Body of pancreas (tissue), 4 donors: ENCODE measurements at regions of chr4 and their contacts with region 1.

Region 1: DNA sequence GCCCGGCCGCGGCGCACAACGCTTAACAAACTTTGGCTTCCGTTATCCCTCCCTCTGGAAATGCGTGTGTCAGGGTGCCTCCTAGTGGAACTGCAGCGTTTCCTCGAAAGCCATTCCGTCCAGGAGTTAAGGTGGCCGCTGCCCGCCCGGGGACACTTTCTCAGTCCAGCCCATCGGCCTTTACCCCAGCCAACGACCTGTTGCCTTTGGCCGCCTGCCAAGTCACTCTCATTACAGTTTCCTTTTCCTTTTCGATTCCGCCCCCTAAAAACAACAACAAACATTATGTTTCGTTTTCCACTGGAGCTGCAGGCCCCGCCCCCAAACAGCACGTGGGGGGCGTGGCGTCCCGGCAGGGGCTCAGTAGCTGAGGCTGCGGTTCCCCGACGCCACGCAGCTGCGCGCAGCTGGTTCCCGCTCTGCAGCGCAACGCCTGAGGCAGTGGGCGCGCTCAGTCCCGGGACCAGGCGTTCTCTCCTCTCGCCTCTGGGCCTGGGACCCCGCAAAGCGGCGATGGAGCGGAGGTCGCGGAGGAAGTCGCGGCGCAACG is at the start of gene HERC5:
- DNase-seq: peak; percentile 91 to 94 (median 92)
- ATAC-seq: peak; percentile 94
- H3K4me3 ChIP-seq: peak within 1 kb of the TSS; percentile 73 to 83
- H3K27ac ChIP-seq: peak within 1 kb of the TSS; percentile 26 to 84 (median 79)
- H3K4me1 ChIP-seq: peaks cover 11% of the 10 kb centered on the region
- H3K27me3 ChIP-seq: no peaks in the 10 kb centered on the region
- CTCF ChIP-seq: peak; percentile 39 to 92 (median 67)
- POLR2A ChIP-seq: peak; percentile 57 to 79 (median 79)
- total RNA-seq, gene HERC5: 2.6 to 3.9 TPM

Region 2: GRCh38 chr4:88225232-88226105 is 231.4 kb before region 1 on chr4:
- intact Hi-C with region 1: loop called (anchors 10 kb)
- DNase-seq: no peak
- ATAC-seq: no peak
- H3K4me3 ChIP-seq: no peak overlapping the region
- H3K27ac ChIP-seq: no peak overlapping the region
- H3K4me1 ChIP-seq: no peaks in the 10 kb centered on the region
- H3K27me3 ChIP-seq: no peaks in the 10 kb centered on the region
- CTCF ChIP-seq: no peak
- POLR2A ChIP-seq: no peak